CD4-positive, alpha-beta T cell (primary cell): ENCODE measurements at regions of chr7 and their contacts with region 1.

Region 1: GRCh38 chr7:30740424-30741181 is 11.3 kb upstream of the INMT start:
- DNase-seq: peak; percentile 56 to 85 (median 73)
- ATAC-seq: peak; percentile 66
- H3K4me3 ChIP-seq: no peak overlapping the region
- H3K4me3 Mint-ChIP-seq: peak overlapping the region; percentile 46
- H3K27ac ChIP-seq: no peak overlapping the region
- H3K27ac Mint-ChIP-seq: peak overlapping the region; percentile 70
- H3K4me1 ChIP-seq: peaks cover 51% of the 10 kb centered on the region
- H3K4me1 Mint-ChIP-seq: peaks cover 35% of the 10 kb centered on the region
- H3K27me3 ChIP-seq: no peaks in the 10 kb centered on the region
- H3K27me3 Mint-ChIP-seq: no peaks in the 10 kb centered on the region
- CTCF ChIP-seq: peak; percentile 99

Region 2: GRCh38 chr7:30510124-30511075 is 230.2 kb before region 1 on chr7:
- CTCF ChIA-PET with region 1: no interaction called
- POLR2A ChIA-PET with region 1: no interaction called
- intact Hi-C with region 1: loop called in 1 of 2 experiments (anchors 2 kb)
- DNase-seq: peak in 7 of 14 experiments; percentile 9 to 60 (median 39)
- ATAC-seq: peak; percentile 76
- H3K4me3 ChIP-seq: no peak overlapping the region
- H3K4me3 Mint-ChIP-seq: no peak overlapping the region
- H3K27ac ChIP-seq: no peak overlapping the region
- H3K27ac Mint-ChIP-seq: no peak overlapping the region
- H3K4me1 ChIP-seq: peaks cover 3% of the 10 kb centered on the region
- H3K4me1 Mint-ChIP-seq: no peaks in the 10 kb centered on the region
- H3K27me3 ChIP-seq: no peaks in the 10 kb centered on the region
- H3K27me3 Mint-ChIP-seq: no peaks in the 10 kb centered on the region
- CTCF ChIP-seq: peak; percentile 88

Region 3: DNA sequence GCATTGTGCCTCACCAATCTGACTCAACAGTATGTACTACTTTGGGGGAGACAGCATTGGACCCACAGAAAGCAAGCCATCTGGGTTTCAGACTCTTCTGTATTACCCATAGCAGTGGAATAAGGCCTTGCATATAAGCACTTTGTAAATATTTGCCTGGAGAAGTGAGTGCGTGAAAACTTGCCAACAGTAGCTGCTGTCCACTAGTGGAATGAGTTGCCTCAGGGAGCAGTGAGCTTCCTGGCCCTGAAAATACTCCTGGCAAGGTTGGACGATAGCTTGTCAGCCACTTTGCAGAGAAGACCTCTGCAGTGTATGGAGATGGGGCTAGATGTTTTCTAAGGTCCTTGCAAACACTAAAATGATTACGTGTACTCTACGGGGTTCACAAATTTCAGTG is 124.3 kb before region 1 on chr7:
- CTCF ChIA-PET with region 1: no interaction called
- POLR2A ChIA-PET with region 1: no interaction called
- intact Hi-C with region 1: loop called in 1 of 2 experiments (anchors 5 kb)
- DNase-seq: no peak
- ATAC-seq: no peak
- H3K4me3 ChIP-seq: no peak overlapping the region
- H3K4me3 Mint-ChIP-seq: no peak overlapping the region
- H3K27ac ChIP-seq: no peak overlapping the region
- H3K27ac Mint-ChIP-seq: no peak overlapping the region
- H3K4me1 ChIP-seq: no peaks in the 10 kb centered on the region
- H3K4me1 Mint-ChIP-seq: peaks cover 6% of the 10 kb centered on the region
- H3K27me3 ChIP-seq: no peaks in the 10 kb centered on the region
- H3K27me3 Mint-ChIP-seq: no peaks in the 10 kb centered on the region
- CTCF ChIP-seq: no peak

Region 4: DNA sequence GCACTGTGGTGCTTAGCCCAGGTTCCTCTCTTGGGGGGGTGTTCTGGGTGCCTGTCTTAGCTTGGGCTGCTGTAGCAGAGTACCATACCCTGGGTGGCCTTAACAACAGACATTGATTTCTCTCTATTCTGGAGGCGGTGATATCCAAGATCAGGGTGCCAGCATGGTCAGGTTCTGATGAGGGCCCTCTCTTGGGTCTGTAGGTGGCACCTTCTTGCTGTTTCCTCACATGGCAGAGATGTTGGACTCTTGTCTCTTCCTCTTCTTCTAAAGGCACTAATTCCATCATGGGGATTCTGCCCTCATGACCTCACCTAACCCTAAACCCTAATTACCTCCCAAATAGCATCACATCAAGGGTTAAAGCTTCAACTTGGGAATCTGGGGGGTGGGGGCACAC is 38.4 kb before region 1 on chr7:
- CTCF ChIA-PET with region 1: interaction called, 6 read pairs
- POLR2A ChIA-PET with region 1: interaction called, 15 read pairs
- intact Hi-C with region 1: loop called (anchors 1 kb)
- DNase-seq: peak in 5 of 14 experiments; percentile 30 to 66 (median 49)
- ATAC-seq: no peak
- H3K4me3 ChIP-seq: no peak overlapping the region
- H3K4me3 Mint-ChIP-seq: no peak overlapping the region
- H3K27ac ChIP-seq: no peak overlapping the region
- H3K27ac Mint-ChIP-seq: no peak overlapping the region
- H3K4me1 ChIP-seq: peaks cover 12% of the 10 kb centered on the region
- H3K4me1 Mint-ChIP-seq: peaks cover 6% of the 10 kb centered on the region
- H3K27me3 ChIP-seq: no peaks in the 10 kb centered on the region
- H3K27me3 Mint-ChIP-seq: no peaks in the 10 kb centered on the region
- CTCF ChIP-seq: peak; percentile 20